ENCODE measurements at regions of chr1 and their contacts with region 1.

Region 1: GRCh38 chr1:58618303-58618702 is 41.3 kb upstream of the TACSTD2 start:
- DNase-seq: peak; percentile 54
- ATAC-seq: peak; percentile 94
- H3K4me3 Mint-ChIP-seq: no peak overlapping the region
- H3K27ac Mint-ChIP-seq: no peak overlapping the region
- H3K4me1 Mint-ChIP-seq: peaks cover 15% of the 10 kb centered on the region
- H3K27me3 Mint-ChIP-seq: peaks cover 15% of the 10 kb centered on the region

Region 2: GRCh38 chr1:58546520-58547308 is 71.6 kb before region 1 on chr1 and contains the start of gene OMA1:
- CTCF ChIA-PET with region 1: no interaction called
- POLR2A ChIA-PET with region 1: no interaction called
- intact Hi-C with region 1: no loop called
- DNase-seq: peak; percentile 97
- ATAC-seq: peak; percentile 93
- H3K4me3 Mint-ChIP-seq: peak within 1 kb of the TSS; percentile 86
- H3K27ac Mint-ChIP-seq: peak within 1 kb of the TSS; percentile 96
- H3K4me1 Mint-ChIP-seq: peaks cover 18% of the 10 kb centered on the region
- H3K27me3 Mint-ChIP-seq: peaks cover 1% of the 10 kb centered on the region
- total RNA-seq, gene OMA1: 8.8 to 11.6 TPM

Region 3: DNA sequence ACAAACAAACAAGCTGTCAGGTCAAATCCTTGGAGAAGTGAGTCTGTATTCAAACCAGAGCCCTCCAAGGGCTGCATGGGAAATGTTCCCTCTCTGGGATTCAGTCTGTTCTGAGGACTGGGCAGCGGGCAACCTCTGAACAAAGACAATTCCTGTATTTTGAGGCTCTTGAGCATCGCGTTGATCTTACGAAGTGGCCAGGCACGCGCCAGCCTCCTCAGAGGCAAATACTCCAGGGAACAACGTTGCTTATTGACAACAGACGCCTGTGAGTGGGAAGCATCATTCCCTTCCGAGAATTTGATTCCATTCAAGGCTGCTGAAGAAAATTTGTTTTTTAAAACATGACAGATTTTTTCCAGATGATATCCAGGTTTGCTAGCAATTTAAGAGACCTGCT is 21.2 kb before region 1 on chr1:
- CTCF ChIA-PET with region 1: interaction called, 3 read pairs
- POLR2A ChIA-PET with region 1: interaction called, 3 read pairs
- intact Hi-C with region 1: loop called in 1 of 2 experiments (anchors 2 kb)
- DNase-seq: no peak
- ATAC-seq: no peak
- H3K4me3 Mint-ChIP-seq: no peak overlapping the region
- H3K27ac Mint-ChIP-seq: no peak overlapping the region
- H3K4me1 Mint-ChIP-seq: no peaks in the 10 kb centered on the region
- H3K27me3 Mint-ChIP-seq: peaks cover 47% of the 10 kb centered on the region

Region 4: DNA sequence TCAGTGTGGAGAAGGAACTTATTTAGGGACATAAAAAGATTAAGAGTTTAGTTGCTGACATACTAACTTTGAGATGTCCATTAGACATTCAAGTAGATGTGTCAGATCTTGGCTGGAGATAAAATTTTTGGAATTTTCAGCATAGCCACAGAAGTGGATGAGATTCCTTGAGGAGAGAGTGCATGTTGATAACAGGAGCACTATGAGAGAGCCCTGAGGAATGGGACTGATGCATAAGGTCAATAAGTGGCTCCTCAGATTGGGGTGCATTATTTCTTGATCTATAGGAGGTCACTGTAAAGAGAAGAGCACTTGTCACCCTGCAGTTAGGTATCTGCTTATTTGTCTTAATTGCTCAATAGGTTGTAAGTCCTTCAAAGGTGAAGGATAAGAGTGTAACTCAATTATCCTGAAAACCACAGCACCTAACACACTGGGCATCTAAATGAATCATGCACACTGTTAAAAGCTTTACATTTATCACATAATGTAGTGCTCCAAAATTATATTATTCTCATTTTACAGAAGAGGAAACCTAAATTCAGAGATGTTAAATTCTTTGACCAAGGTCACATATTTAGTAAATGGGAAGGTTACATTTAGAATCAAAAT is 10.8 kb after region 1 on chr1:
- CTCF ChIA-PET with region 1: no interaction called
- POLR2A ChIA-PET with region 1: no interaction called
- intact Hi-C with region 1: no loop called
- DNase-seq: no peak
- ATAC-seq: no peak
- H3K4me3 Mint-ChIP-seq: no peak overlapping the region
- H3K27ac Mint-ChIP-seq: no peak overlapping the region
- H3K4me1 Mint-ChIP-seq: no peaks in the 10 kb centered on the region
- H3K27me3 Mint-ChIP-seq: peaks cover 2% of the 10 kb centered on the region